Natural killer cell (primary cell): ENCODE measurements at regions of chr17 and their contacts with region 1.

Region 1: DNA sequence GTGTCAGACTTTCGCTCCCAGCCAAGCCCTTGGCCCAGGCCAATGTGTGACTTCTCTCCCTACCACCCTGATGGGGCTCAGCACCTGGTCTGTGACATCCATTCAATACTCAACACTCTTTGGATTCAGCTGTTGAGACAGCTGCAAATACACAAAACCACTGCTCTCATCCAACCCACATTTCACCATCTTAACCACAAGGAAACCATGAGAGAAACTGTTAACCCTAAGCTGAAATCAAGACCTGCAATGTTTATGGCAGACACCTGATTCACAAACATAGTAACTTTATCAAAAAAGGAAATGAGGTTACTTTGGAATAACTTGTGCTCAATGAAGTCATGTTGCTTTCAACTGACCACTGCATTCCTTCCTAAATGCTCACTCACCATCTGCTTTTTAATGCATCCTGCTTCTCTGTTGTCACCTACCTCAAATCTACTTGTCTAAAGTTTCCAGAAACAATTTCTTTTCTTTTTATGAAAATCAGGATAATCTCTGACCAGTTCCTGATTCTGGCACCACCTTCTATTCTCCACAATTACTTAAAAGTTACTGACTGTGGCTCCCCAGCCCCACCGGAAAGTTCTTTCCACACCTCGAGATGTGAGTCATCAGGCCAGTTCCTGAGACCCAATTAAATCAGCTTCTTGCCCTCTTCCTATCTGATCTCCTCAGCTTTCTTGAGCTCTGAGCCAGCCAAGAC is 88.2 kb downstream of the NOG start:
- DNase-seq: peak in 1 of 2 donors; percentile 38
- ATAC-seq: peak; percentile 57 to 75 (median 74)
- H3K4me3 ChIP-seq: no peak overlapping the region
- H3K4me3 Mint-ChIP-seq: no peak overlapping the region
- H3K27ac ChIP-seq: no peak overlapping the region
- H3K27ac Mint-ChIP-seq: no peak overlapping the region
- H3K4me1 ChIP-seq: peaks cover 47% of the 10 kb centered on the region
- H3K4me1 Mint-ChIP-seq: peaks cover 21% of the 10 kb centered on the region in 2 donors
- H3K27me3 ChIP-seq: peaks cover 67% of the 10 kb centered on the region
- H3K27me3 Mint-ChIP-seq: peaks cover 60 to 62% of the 10 kb centered on the region in 2 donors
- CTCF ChIP-seq: no peak

Region 2: GRCh38 chr17:55830699-55831445 is 850.8 kb before region 1 on chr17:
- intact Hi-C with region 1: no loop called
- DNase-seq: no peak
- ATAC-seq: no peak
- H3K4me3 ChIP-seq: no peak overlapping the region
- H3K4me3 Mint-ChIP-seq: no peak overlapping the region
- H3K27ac ChIP-seq: no peak overlapping the region
- H3K27ac Mint-ChIP-seq: no peak overlapping the region
- H3K4me1 ChIP-seq: no peaks in the 10 kb centered on the region
- H3K4me1 Mint-ChIP-seq: no peaks in the 10 kb centered on the region
- H3K27me3 ChIP-seq: no peaks in the 10 kb centered on the region
- H3K27me3 Mint-ChIP-seq: peaks cover 0 to 4% of the 10 kb centered on the region in 2 donors
- CTCF ChIP-seq: no peak

Region 3: DNA sequence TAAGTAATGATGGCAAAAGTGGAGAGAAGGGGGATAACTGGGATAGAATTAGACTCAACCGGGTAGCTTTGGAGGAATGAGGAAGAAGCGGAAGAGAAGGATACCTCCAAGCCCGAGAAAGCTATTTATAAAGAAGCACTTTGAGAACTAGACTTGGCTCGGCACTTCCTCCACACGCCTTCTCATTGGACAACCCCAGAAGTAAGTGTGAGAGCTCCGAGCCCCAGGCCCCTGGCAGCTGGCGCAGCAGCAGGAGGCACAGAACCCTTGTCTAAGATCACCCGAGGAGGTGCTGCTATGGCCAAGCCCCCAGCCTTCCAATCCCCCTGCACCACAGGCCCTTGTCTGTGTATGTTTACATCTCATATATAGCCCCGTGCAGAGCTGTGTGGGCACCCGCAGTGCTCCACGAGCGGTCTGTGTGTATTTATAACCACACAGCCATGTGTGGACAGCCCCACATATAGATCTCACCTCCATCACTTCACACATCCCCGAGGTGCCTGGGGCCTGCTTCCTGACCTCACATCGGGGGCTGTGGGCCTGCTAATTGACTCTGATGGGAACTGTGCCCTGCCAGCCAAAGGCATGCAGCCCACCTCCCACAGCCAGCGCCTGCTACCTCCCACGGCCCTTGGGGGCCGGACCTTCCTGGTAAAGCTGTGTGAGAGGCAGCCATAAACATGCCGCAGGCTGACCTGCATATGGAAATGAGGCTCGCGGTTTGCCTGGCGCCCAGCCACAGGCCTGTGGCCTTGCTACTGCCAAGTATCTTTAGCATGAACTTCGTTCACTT is 55.9 kb after region 1 on chr17:
- intact Hi-C with region 1: loop called (anchors 5 kb)
- DNase-seq: peak; percentile 14 to 59
- ATAC-seq: peak; percentile 88 to 97 (median 88)
- H3K4me3 ChIP-seq: no peak overlapping the region
- H3K4me3 Mint-ChIP-seq: peak overlapping the region; percentile 64
- H3K27ac ChIP-seq: no peak overlapping the region
- H3K27ac Mint-ChIP-seq: peak overlapping the region; percentile 55 to 65
- H3K4me1 ChIP-seq: peaks cover 27% of the 10 kb centered on the region
- H3K4me1 Mint-ChIP-seq: peaks cover 34% of the 10 kb centered on the region in 2 donors
- H3K27me3 ChIP-seq: peaks cover 3% of the 10 kb centered on the region
- H3K27me3 Mint-ChIP-seq: peaks cover 33 to 58% of the 10 kb centered on the region in 2 donors
- CTCF ChIP-seq: no peak